ENCODE measurements at regions of chr3 and their contacts with region 1.

Region 1: GRCh38 chr3:108662130-108662738 is 72.7 kb downstream of the DZIP3 start:
- DNase-seq: peak; percentile 13
- H3K4me3 Mint-ChIP-seq: no peak overlapping the region
- H3K27ac Mint-ChIP-seq: no peak overlapping the region
- H3K4me1 Mint-ChIP-seq: peaks cover 24% of the 10 kb centered on the region
- H3K27me3 Mint-ChIP-seq: peaks cover 2% of the 10 kb centered on the region

Region 2: DNA sequence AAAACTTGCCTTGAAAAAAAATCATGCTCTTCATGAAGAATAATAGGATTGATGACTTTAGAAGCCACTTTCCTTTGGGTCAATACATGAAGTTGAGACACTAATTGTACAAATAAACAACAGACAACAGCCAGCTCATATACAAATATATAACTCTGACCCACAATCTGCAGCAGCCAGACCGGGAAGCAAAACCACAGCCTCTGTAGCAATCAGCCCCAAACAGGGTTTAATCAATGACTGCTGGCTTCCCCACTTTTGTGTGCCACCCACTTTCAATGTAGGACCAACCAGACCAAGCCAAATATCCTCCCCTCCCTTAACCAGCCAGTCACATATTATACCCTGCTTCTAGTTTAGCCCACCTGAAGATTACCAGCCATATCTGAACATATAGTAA is 479.1 kb before region 1 on chr3:
- intact Hi-C with region 1: no loop called
- DNase-seq: no peak
- H3K4me3 Mint-ChIP-seq: no peak overlapping the region
- H3K27ac Mint-ChIP-seq: no peak overlapping the region
- H3K4me1 Mint-ChIP-seq: peaks cover 2% of the 10 kb centered on the region
- H3K27me3 Mint-ChIP-seq: no peaks in the 10 kb centered on the region

Region 3: GRCh38 chr3:108914774-108915641 is 252.8 kb after region 1 on chr3:
- intact Hi-C with region 1: loop called (anchors 1 kb)
- DNase-seq: peak; percentile 57
- H3K4me3 Mint-ChIP-seq: peak overlapping the region; percentile 5
- H3K27ac Mint-ChIP-seq: no peak overlapping the region
- H3K4me1 Mint-ChIP-seq: peaks cover 16% of the 10 kb centered on the region
- H3K27me3 Mint-ChIP-seq: peaks cover 19% of the 10 kb centered on the region

Region 4: GRCh38 chr3:109081746-109082510 is 419.7 kb after region 1 on chr3:
- intact Hi-C with region 1: loop called (anchors 5 kb)
- DNase-seq: no peak
- H3K4me3 Mint-ChIP-seq: no peak overlapping the region
- H3K27ac Mint-ChIP-seq: no peak overlapping the region
- H3K4me1 Mint-ChIP-seq: peaks cover 4% of the 10 kb centered on the region
- H3K27me3 Mint-ChIP-seq: peaks cover 16% of the 10 kb centered on the region

Measured in activated T-helper 2 cell treated with anti-CD3 and anti-CD28 coated beads, Interferon-gamma antibody, Interleukin-2, Interleukin-4, amounts not matched to agents 10 μg/mL and 5 μg/mL and 100 μg/mL, durations not matched to agents 14 hours and 24 hours and 36 hours (primary cell).